AG04450 (cell line): ENCODE measurements at regions of chr10 and their contacts with region 1.

Region 1: GRCh38 chr10:72126184-72126871 is 38.0 kb upstream of the SPOCK2 start:
- DNase-seq: peak; percentile 10
- H3K4me3 ChIP-seq: no peak overlapping the region
- H3K27ac ChIP-seq: no peak overlapping the region
- H3K27me3 ChIP-seq: no peaks in the 10 kb centered on the region
- CTCF ChIP-seq: peak; percentile 59

Region 2: GRCh38 chr10:72066318-72067284 is 59.7 kb before region 1 on chr10:
- CTCF ChIA-PET with region 1: interaction called, 15 read pairs
- POLR2A ChIA-PET with region 1: no interaction called
- DNase-seq: no peak
- H3K4me3 ChIP-seq: no peak overlapping the region
- H3K27ac ChIP-seq: peak overlapping the region; percentile 11
- H3K27me3 ChIP-seq: peaks cover 16% of the 10 kb centered on the region
- CTCF ChIP-seq: no peak

Region 3: GRCh38 chr10:72215652-72216549 is 89.6 kb after region 1 on chr10 and contains the starts of genes ANAPC16 and ASCC1:
- CTCF ChIA-PET with region 1: interaction called, 50 read pairs
- POLR2A ChIA-PET with region 1: no interaction called
- DNase-seq: peak; percentile 80
- H3K4me3 ChIP-seq: peak within 1 kb of the TSS; percentile 89
- H3K27ac ChIP-seq: peak within 1 kb of the TSS; percentile 97
- H3K27me3 ChIP-seq: no peaks in the 10 kb centered on the region
- CTCF ChIP-seq: no peak
- polyA plus RNA-seq, gene ANAPC16: 51.1 and 67.0 TPM in 2 replicates
- polyA plus RNA-seq, gene ASCC1: 36.3 and 43.7 TPM in 2 replicates

Region 4: DNA sequence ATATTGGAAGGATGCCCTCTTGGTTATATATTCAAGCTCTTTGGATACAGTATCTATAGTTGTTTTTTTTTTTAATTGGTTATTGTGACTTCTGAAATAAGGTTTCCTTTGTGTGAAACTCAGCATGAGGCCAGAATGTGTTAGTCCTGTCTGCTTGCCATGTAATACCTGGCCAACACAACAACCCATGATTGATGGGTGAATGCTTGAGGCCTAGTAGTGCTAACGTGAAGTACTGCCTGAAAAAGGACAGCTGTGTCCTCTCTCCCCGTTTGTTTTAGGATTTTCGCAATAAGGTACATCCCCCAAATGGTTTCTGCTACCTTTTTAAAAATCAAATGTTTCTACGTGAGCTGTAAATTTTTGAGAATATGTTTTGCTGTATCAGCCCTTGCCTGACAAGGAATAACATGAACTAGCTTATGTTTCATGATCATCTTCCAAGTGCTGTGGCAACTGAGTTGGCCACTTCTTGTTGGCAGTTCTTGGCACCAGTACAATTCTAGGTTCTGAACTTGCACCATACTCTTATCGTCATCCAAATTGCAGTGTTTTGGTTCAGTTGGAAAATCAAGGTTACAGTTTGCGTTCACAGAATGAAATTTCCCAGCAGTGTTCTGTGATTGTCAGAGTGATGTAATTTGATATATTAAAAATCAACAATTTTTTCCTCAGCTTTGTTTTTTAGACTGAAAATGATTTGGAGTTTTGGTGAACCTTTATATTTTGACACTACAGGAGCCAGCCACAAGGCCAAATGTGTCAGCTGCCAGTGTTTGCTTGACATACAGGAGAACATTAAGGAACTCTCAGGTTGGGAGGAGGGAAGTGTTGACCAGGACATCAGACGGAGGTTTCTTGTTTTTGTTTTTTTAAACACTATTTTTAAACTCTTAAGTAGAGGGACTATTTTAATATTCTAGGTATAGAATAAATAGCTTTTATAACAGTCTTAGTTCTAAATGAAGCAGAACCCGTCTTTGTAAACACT is 103.2 kb after region 1 on chr10:
- CTCF ChIA-PET with region 1: interaction called, 50 read pairs
- POLR2A ChIA-PET with region 1: no interaction called
- DNase-seq: no peak
- H3K4me3 ChIP-seq: no peak overlapping the region
- H3K27ac ChIP-seq: no peak overlapping the region
- H3K27me3 ChIP-seq: no peaks in the 10 kb centered on the region
- CTCF ChIP-seq: no peak

Region 5: DNA sequence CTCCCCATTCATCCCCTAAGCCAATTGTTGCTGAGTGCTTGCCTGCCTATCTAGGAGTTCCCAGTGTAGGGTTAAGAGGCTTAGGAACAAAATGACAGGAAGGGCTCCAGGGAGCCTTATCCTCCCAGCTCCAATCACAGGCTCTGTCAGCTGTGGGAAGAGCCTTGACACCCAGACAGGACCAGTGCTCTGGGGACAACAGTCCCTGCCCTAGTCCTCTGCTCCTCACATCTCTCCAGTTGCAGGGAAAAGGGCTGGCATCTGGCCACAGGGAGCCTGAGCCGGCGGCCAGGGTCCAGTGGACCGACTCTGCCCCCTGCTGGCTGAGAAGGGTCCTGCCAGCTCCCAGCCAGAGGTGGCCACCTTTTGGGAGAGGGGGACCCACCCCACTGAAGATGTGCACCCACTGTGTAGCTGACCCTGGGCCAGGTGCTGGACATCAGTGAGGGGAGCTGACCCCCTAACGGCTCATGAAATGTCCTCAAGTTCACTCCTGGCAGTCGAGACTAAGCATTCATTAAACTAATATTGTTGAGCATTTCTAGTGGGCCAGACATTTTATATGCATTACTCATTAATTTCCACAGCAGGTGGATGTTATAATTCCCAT is 210.8 kb after region 1 on chr10:
- CTCF ChIA-PET with region 1: interaction called, 31 read pairs
- POLR2A ChIA-PET with region 1: no interaction called
- DNase-seq: no peak
- H3K4me3 ChIP-seq: no peak overlapping the region
- H3K27ac ChIP-seq: no peak overlapping the region
- H3K27me3 ChIP-seq: no peaks in the 10 kb centered on the region
- CTCF ChIP-seq: peak; percentile 94